ENCODE measurements at regions of chr11 and their contacts with region 1.

Region 1: GRCh38 chr11:60389279-60389910 is 6.9 kb upstream of the MS4A14 start:
- DNase-seq: peak in 1 of 9 experiments; percentile 23
- ATAC-seq: no peak
- H3K4me3 ChIP-seq: no peak overlapping the region
- H3K4me3 Mint-ChIP-seq: no peak overlapping the region
- H3K27ac ChIP-seq: no peak overlapping the region
- H3K27ac Mint-ChIP-seq: no peak overlapping the region
- H3K4me1 ChIP-seq: no peaks in the 10 kb centered on the region
- H3K4me1 Mint-ChIP-seq: no peaks in the 10 kb centered on the region
- H3K27me3 ChIP-seq: no peaks in the 10 kb centered on the region
- H3K27me3 Mint-ChIP-seq: no peaks in the 10 kb centered on the region
- CTCF ChIP-seq: no peak

Region 2: DNA sequence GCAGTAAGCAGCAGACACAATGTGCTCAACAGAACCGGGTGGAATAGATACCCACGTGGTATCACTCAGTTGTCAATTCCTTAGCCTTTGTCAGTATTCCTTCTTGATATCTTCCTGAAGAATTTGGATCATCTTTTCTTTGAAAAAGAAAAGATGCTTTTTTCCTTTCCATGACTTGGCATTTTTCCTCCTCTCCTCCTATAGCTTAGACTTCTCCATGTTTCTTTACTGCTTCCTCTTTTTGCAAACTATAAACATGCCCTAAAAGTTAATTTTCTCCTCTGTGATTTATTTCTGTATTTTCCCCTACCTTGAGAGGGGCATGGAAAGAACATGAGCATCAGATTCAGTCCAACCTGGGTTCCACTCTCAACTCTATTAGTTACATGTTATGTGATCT is 555.8 kb before region 1 on chr11:
- CTCF ChIA-PET with region 1: no interaction called
- POLR2A ChIA-PET with region 1: no interaction called
- intact Hi-C with region 1: no loop called
- DNase-seq: no peak
- ATAC-seq: no peak
- H3K4me3 ChIP-seq: no peak overlapping the region
- H3K4me3 Mint-ChIP-seq: no peak overlapping the region
- H3K27ac ChIP-seq: no peak overlapping the region
- H3K27ac Mint-ChIP-seq: no peak overlapping the region
- H3K4me1 ChIP-seq: no peaks in the 10 kb centered on the region
- H3K4me1 Mint-ChIP-seq: no peaks in the 10 kb centered on the region
- H3K27me3 ChIP-seq: no peaks in the 10 kb centered on the region
- H3K27me3 Mint-ChIP-seq: peaks cover 8% of the 10 kb centered on the region
- CTCF ChIP-seq: no peak

Region 3: GRCh38 chr11:60428517-60428916 is 39.1 kb after region 1 on chr11:
- CTCF ChIA-PET with region 1: no interaction called
- POLR2A ChIA-PET with region 1: no interaction called
- intact Hi-C with region 1: no loop called
- DNase-seq: no peak
- ATAC-seq: no peak
- H3K4me3 ChIP-seq: no peak overlapping the region
- H3K4me3 Mint-ChIP-seq: no peak overlapping the region
- H3K27ac ChIP-seq: no peak overlapping the region
- H3K27ac Mint-ChIP-seq: no peak overlapping the region
- H3K4me1 ChIP-seq: no peaks in the 10 kb centered on the region
- H3K4me1 Mint-ChIP-seq: no peaks in the 10 kb centered on the region
- H3K27me3 ChIP-seq: no peaks in the 10 kb centered on the region
- H3K27me3 Mint-ChIP-seq: peaks cover 31% of the 10 kb centered on the region
- CTCF ChIP-seq: no peak

Region 4: GRCh38 chr11:60447846-60448245 is 58.5 kb after region 1 on chr11:
- CTCF ChIA-PET with region 1: no interaction called
- POLR2A ChIA-PET with region 1: no interaction called
- intact Hi-C with region 1: loop called in 1 of 2 experiments (anchors 10 kb)
- DNase-seq: no peak
- ATAC-seq: no peak
- H3K4me3 ChIP-seq: no peak overlapping the region
- H3K4me3 Mint-ChIP-seq: no peak overlapping the region
- H3K27ac ChIP-seq: no peak overlapping the region
- H3K27ac Mint-ChIP-seq: peak overlapping the region; percentile 19
- H3K4me1 ChIP-seq: peaks cover 5% of the 10 kb centered on the region
- H3K4me1 Mint-ChIP-seq: peaks cover 19% of the 10 kb centered on the region
- H3K27me3 ChIP-seq: no peaks in the 10 kb centered on the region
- H3K27me3 Mint-ChIP-seq: no peaks in the 10 kb centered on the region
- CTCF ChIP-seq: no peak